CD8-positive, alpha-beta memory T cell (primary cell): ENCODE measurements at regions of chr7 and their contacts with region 1.

Region 1: DNA sequence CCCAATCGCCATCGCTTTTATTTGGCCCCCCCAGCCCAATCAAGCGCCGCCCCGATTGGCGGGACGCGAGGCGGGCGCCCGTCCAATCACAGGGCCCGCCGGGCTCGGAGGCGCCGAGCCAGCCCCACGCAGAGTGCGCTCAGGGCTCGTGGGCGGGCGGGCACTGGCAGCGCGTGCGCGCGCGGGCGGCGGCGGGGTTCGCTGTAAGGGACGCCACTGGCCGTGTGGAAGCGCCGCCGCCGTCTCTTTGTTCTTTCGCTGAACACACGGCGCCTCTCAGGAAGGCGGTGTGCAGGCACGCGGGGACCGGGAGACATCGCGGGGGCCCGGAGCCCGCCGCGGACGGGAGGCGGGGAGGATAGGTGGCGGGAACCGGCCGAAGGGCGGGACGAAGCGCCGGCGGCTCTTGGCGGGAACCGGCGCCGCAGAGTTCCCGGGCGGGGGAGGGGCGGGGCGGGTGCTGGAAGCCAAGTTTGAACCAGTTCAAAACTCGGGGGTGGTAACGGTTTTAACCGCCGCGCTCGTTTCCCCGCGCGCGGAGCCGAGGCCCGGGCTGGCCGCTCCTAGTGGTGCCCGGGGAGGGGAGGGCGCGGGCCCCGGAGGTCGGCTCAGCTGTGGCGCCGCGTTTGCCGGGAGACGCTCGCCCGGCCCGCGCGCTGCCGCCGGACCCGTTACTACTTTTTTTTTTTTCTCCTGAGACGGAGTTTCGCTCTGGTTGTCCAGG is 370 bp upstream of the EZH2 start:
- DNase-seq: peak; percentile 88 to 95 (median 94)
- H3K4me3 ChIP-seq: peak overlapping the region; percentile 53
- H3K4me3 Mint-ChIP-seq: peak overlapping the region; percentile 88 to 97 (median 91)
- H3K27ac ChIP-seq: peak overlapping the region; percentile 81
- H3K27ac Mint-ChIP-seq: peak overlapping the region; percentile 85 to 96 (median 92)
- H3K4me1 ChIP-seq: peaks cover 7% of the 10 kb centered on the region
- H3K4me1 Mint-ChIP-seq: peaks cover 12 to 46% (median 32%) of the 10 kb centered on the region in 3 donors
- H3K27me3 ChIP-seq: no peaks in the 10 kb centered on the region
- H3K27me3 Mint-ChIP-seq: peaks cover 4 to 19% of the 10 kb centered on the region in 2 donors

Region 2: DNA sequence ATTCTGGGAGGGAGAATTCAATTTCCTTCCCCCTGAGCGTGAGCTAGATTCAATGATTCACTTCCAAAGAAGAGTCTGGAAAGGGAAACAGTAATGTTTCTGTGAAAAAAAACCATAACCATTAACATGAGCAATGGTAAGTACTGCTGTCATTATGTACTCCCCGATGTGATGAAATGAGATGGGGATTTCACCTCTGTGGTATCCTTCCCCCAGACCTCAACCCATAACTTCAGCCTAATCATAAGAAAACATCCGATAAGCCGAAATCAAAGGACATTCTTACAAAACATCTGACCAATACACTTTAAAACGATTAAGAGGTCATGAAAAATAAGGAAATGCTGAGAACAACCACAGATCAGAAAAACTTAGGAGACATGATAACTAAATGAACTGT is 27.6 kb before region 1 on chr7:
- CTCF ChIA-PET with region 1: interaction called, 13 read pairs
- POLR2A ChIA-PET with region 1: interaction called, 4 read pairs
- DNase-seq: no peak
- H3K4me3 ChIP-seq: no peak overlapping the region
- H3K4me3 Mint-ChIP-seq: no peak overlapping the region
- H3K27ac ChIP-seq: no peak overlapping the region
- H3K27ac Mint-ChIP-seq: peak overlapping the region in 2 of 8 donors; percentile 7 to 35
- H3K4me1 ChIP-seq: no peaks in the 10 kb centered on the region
- H3K4me1 Mint-ChIP-seq: peaks cover 10 to 46% (median 27%) of the 10 kb centered on the region in 3 donors
- H3K27me3 ChIP-seq: no peaks in the 10 kb centered on the region
- H3K27me3 Mint-ChIP-seq: no peaks in the 10 kb centered on the region

Region 3: DNA sequence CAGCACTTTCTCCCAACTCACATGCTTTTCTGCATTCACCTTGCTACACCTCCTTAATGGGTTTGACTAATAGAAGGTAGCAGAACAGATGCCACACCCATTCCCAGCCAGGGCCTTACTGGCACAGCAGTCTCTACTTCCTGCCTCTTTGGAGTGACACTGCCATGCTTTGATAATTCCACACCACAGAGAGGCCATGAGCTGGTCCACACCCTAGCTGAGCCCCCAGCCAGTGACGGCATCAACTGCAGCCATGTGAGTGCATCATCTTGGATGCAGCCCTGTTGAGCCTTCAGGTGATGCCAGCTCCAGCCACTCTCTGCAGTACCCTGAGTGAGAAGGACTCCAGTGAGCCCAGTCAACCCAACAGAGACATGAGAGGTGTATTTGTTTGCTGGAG is 27.2 kb after region 1 on chr7:
- CTCF ChIA-PET with region 1: no interaction called
- POLR2A ChIA-PET with region 1: interaction called, 10 read pairs
- DNase-seq: no peak
- H3K4me3 ChIP-seq: no peak overlapping the region
- H3K4me3 Mint-ChIP-seq: peak overlapping the region in 1 of 7 donors; percentile 54
- H3K27ac ChIP-seq: no peak overlapping the region
- H3K27ac Mint-ChIP-seq: peak overlapping the region in 1 of 8 donors; percentile 90
- H3K4me1 ChIP-seq: peaks cover 45% of the 10 kb centered on the region
- H3K4me1 Mint-ChIP-seq: peaks cover 34 to 48% (median 44%) of the 10 kb centered on the region in 3 donors
- H3K27me3 ChIP-seq: no peaks in the 10 kb centered on the region
- H3K27me3 Mint-ChIP-seq: peaks cover 0 to 2% of the 10 kb centered on the region in 2 donors

Region 4: GRCh38 chr7:148927123-148928045 is 42.9 kb after region 1 on chr7:
- CTCF ChIA-PET with region 1: no interaction called
- POLR2A ChIA-PET with region 1: no interaction called
- DNase-seq: no peak
- H3K4me3 ChIP-seq: no peak overlapping the region
- H3K4me3 Mint-ChIP-seq: no peak overlapping the region
- H3K27ac ChIP-seq: no peak overlapping the region
- H3K27ac Mint-ChIP-seq: peak overlapping the region in 1 of 8 donors; percentile 14
- H3K4me1 ChIP-seq: no peaks in the 10 kb centered on the region
- H3K4me1 Mint-ChIP-seq: peaks cover 0 to 8% (median 0%) of the 10 kb centered on the region in 3 donors
- H3K27me3 ChIP-seq: no peaks in the 10 kb centered on the region
- H3K27me3 Mint-ChIP-seq: no peaks in the 10 kb centered on the region